Prostate gland (tissue), 2 donors: ENCODE measurements at regions of chr10 and their contacts with region 1.

Region 1: GRCh38 chr10:119207367-119207668 is at the start of gene GRK5:
- DNase-seq: peak; percentile 90
- H3K4me3 ChIP-seq: peak within 1 kb of the TSS; percentile 72 to 85
- H3K27ac ChIP-seq: peak within 1 kb of the TSS; percentile 93 to 94
- H3K4me1 ChIP-seq: peaks cover 22% of the 10 kb centered on the region
- H3K27me3 ChIP-seq: no peaks in the 10 kb centered on the region
- CTCF ChIP-seq: peak in 1 of 4 experiments; percentile 3
- POLR2A ChIP-seq: peak; percentile 51
- total RNA-seq, gene GRK5: 4.8 to 10.6 TPM

Region 2: DNA sequence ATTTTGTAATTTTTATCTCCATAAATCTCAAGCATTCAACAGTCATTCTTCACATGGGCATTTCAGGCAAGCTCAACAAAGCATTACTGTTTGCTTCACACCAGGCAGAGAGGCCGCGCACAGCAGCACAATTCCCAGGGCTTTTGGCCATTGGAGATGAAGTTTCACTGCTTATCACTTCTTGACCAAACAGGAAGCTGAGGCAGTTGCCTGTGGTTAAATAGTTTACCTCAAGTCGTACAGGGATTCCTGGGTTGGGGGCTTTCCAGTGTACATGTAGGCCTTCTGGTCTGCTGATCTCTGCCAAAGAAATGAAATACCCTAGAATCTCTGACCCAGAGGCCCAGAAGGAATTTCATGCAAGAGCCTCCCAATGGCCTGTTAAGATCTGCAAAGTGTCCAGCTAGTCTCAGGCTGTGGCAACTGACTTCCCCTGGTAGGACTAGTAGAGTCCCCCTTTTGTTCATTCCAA is 17.5 kb before region 1 on chr10:
- intact Hi-C with region 1: no loop called
- DNase-seq: no peak
- H3K4me3 ChIP-seq: no peak overlapping the region
- H3K27ac ChIP-seq: no peak overlapping the region
- H3K4me1 ChIP-seq: no peaks in the 10 kb centered on the region
- H3K27me3 ChIP-seq: no peaks in the 10 kb centered on the region
- CTCF ChIP-seq: no peak
- POLR2A ChIP-seq: no peak

Region 3: GRCh38 chr10:119253433-119254174 is 46.3 kb after region 1 on chr10:
- intact Hi-C with region 1: loop called (anchors 5 kb)
- DNase-seq: no peak
- H3K4me3 ChIP-seq: no peak overlapping the region
- H3K27ac ChIP-seq: peak overlapping the region; percentile 64 to 67
- H3K4me1 ChIP-seq: no peaks in the 10 kb centered on the region
- H3K27me3 ChIP-seq: no peaks in the 10 kb centered on the region
- CTCF ChIP-seq: no peak
- POLR2A ChIP-seq: no peak

Region 4: DNA sequence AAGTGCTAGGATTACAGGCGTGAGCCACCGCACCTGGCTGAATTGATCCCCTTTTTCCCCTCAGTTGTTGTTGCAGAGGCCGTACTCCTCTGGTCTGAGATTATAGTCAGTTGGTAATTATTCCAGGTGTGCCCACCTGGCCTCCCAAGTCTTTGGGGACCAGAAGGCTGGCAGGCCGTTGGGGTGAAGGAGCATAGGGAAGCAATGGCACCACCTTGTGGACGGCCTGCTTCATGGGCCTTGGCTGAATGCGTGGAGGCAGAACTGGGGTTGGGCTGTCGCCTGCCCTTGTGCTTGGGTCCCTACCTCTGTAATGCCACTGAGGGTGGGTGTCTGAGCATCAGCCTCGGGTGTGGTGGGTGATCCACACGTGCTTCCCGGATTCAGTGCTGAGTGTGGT is 209.5 kb after region 1 on chr10:
- intact Hi-C with region 1: loop called (anchors 2 kb)
- DNase-seq: peak; percentile 27
- H3K4me3 ChIP-seq: no peak overlapping the region
- H3K27ac ChIP-seq: no peak overlapping the region
- H3K4me1 ChIP-seq: no peaks in the 10 kb centered on the region
- H3K27me3 ChIP-seq: no peaks in the 10 kb centered on the region
- CTCF ChIP-seq: peak; percentile 53 to 69 (median 66)
- POLR2A ChIP-seq: no peak

Region 5: DNA sequence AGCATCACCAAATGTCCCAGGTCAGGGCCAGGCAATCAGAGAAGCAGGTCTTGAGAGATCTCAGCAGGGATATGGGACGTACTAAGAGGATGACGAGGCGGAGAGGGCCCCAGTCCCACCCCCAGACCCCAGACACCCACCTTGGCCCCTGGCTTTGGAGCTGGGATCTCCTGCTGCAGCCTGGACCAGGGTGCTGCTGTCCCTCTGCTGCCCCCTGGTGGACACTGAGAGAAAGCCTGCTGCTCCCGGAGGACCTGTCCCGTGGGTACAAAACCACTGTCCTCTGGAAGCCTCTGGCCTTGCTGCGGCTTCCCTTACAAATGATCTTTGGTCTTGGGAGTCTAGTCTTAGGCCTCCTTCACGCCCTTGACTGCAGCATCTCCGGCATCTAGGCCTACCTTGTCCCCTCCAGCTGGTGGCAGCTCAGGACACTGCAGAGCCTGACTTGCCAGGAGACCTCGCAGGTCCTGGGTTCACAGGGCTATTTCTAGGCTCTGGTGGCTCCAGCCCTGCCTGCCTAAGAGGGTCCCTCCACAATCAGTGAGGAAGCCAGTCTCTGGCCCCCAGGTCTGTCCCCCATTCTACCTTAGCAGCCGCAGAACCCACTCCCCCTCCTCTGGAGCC is 238.1 kb after region 1 on chr10:
- intact Hi-C with region 1: loop called (anchors 1 kb)
- DNase-seq: peak; percentile 83
- H3K4me3 ChIP-seq: no peak overlapping the region
- H3K27ac ChIP-seq: no peak overlapping the region
- H3K4me1 ChIP-seq: no peaks in the 10 kb centered on the region
- H3K27me3 ChIP-seq: no peaks in the 10 kb centered on the region
- CTCF ChIP-seq: peak; percentile 86 to 99 (median 92)
- POLR2A ChIP-seq: no peak

Region 6: GRCh38 chr10:119542988-119543813 is 335.9 kb after region 1 on chr10:
- intact Hi-C with region 1: loop called (anchors 2 kb)
- DNase-seq: peak; percentile 43
- H3K4me3 ChIP-seq: peak overlapping the region; percentile 76 to 85
- H3K27ac ChIP-seq: peak overlapping the region; percentile 76 to 79
- H3K4me1 ChIP-seq: peaks cover 8% of the 10 kb centered on the region
- H3K27me3 ChIP-seq: no peaks in the 10 kb centered on the region
- CTCF ChIP-seq: peak in 3 of 4 experiments; percentile 30 to 61 (median 61)
- POLR2A ChIP-seq: no peak